ENCODE measurements at regions of chr2 and their contacts with region 1.

Region 1: GRCh38 chr2:181457121-181457740 is at the start of gene ITGA4:
- DNase-seq: peak; percentile 87
- ATAC-seq: peak; percentile 78
- H3K4me3 Mint-ChIP-seq: peak within 1 kb of the TSS; percentile 97
- H3K27ac Mint-ChIP-seq: peak within 1 kb of the TSS; percentile 97
- H3K4me1 Mint-ChIP-seq: peaks cover 64% of the 10 kb centered on the region
- H3K27me3 Mint-ChIP-seq: no peaks in the 10 kb centered on the region
- CTCF ChIP-seq: peak; percentile 23
- total RNA-seq, gene ITGA4: 89.2 and 104 TPM in 2 replicates

Region 2: GRCh38 chr2:180980106-180980942 is 476.9 kb before region 1 on chr2 and contains the start of gene UBE2E3:
- CTCF ChIA-PET with region 1: no interaction called
- POLR2A ChIA-PET with region 1: interaction called, 4 read pairs
- intact Hi-C with region 1: loop called (anchors 2 kb)
- DNase-seq: peak; percentile 79
- ATAC-seq: peak; percentile 80
- H3K4me3 Mint-ChIP-seq: peak within 1 kb of the TSS; percentile 93
- H3K27ac Mint-ChIP-seq: peak within 1 kb of the TSS; percentile 95
- H3K4me1 Mint-ChIP-seq: peaks cover 37% of the 10 kb centered on the region
- H3K27me3 Mint-ChIP-seq: no peaks in the 10 kb centered on the region
- CTCF ChIP-seq: no peak
- total RNA-seq, gene UBE2E3: 33.1 and 33.6 TPM in 2 replicates

Region 3: GRCh38 chr2:181104512-181105115 is 352.6 kb before region 1 on chr2:
- CTCF ChIA-PET with region 1: interaction called, 33 read pairs
- POLR2A ChIA-PET with region 1: interaction called, 3 read pairs
- intact Hi-C with region 1: loop called (anchors 1 kb)
- DNase-seq: no peak
- ATAC-seq: no peak
- H3K4me3 Mint-ChIP-seq: no peak overlapping the region
- H3K27ac Mint-ChIP-seq: no peak overlapping the region
- H3K4me1 Mint-ChIP-seq: peaks cover 8% of the 10 kb centered on the region
- H3K27me3 Mint-ChIP-seq: no peaks in the 10 kb centered on the region
- CTCF ChIP-seq: no peak

Region 4: DNA sequence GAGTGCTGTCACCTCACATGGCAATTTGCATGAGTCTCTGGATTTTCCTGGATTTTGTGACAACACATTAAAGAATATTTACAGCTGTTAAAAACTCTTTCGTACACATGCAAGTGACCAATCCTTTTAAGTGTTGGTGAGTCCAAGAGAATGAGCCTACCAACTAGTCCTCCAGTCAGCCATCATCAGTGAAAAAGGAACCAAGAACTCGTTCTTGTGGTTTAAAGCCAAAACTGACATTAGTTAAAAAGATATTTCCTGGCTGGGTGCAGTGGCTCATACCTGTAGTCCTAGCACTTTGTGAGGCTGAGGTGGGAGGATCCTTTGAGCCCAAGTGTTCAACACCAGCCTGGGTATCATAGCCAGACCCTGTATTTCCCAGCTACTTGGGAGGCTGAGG is 215.4 kb before region 1 on chr2:
- CTCF ChIA-PET with region 1: interaction called, 5 read pairs
- POLR2A ChIA-PET with region 1: no interaction called
- intact Hi-C with region 1: loop called (anchors 5 kb)
- DNase-seq: no peak
- ATAC-seq: no peak
- H3K4me3 Mint-ChIP-seq: no peak overlapping the region
- H3K27ac Mint-ChIP-seq: no peak overlapping the region
- H3K4me1 Mint-ChIP-seq: peaks cover 10% of the 10 kb centered on the region
- H3K27me3 Mint-ChIP-seq: no peaks in the 10 kb centered on the region
- CTCF ChIP-seq: no peak

Region 5: GRCh38 chr2:181419129-181419855 is 37.9 kb before region 1 on chr2:
- CTCF ChIA-PET with region 1: interaction called, 9 read pairs
- POLR2A ChIA-PET with region 1: interaction called, 17 read pairs
- intact Hi-C with region 1: loop called (anchors 2 kb)
- DNase-seq: no peak
- ATAC-seq: peak; percentile 82
- H3K4me3 Mint-ChIP-seq: peak overlapping the region; percentile 20
- H3K27ac Mint-ChIP-seq: peak overlapping the region; percentile 87
- H3K4me1 Mint-ChIP-seq: peaks cover 75% of the 10 kb centered on the region
- H3K27me3 Mint-ChIP-seq: no peaks in the 10 kb centered on the region
- CTCF ChIP-seq: no peak

Region 6: GRCh38 chr2:181438261-181438660 is 19.0 kb before region 1 on chr2:
- CTCF ChIA-PET with region 1: interaction called, 11 read pairs
- POLR2A ChIA-PET with region 1: interaction called, 5 read pairs
- intact Hi-C with region 1: loop called (anchors 1 kb)
- DNase-seq: no peak
- ATAC-seq: no peak
- H3K4me3 Mint-ChIP-seq: no peak overlapping the region
- H3K27ac Mint-ChIP-seq: no peak overlapping the region
- H3K4me1 Mint-ChIP-seq: peaks cover 19% of the 10 kb centered on the region
- H3K27me3 Mint-ChIP-seq: no peaks in the 10 kb centered on the region
- CTCF ChIP-seq: no peak

Region 7: GRCh38 chr2:182715896-182716668 is 1258.9 kb after region 1 on chr2 and contains the start of gene DNAJC10:
- CTCF ChIA-PET with region 1: no interaction called
- POLR2A ChIA-PET with region 1: no interaction called
- intact Hi-C with region 1: loop called (anchors 5 kb)
- DNase-seq: peak; percentile 94
- ATAC-seq: peak; percentile 78
- H3K4me3 Mint-ChIP-seq: no peak within 1 kb of the TSS
- H3K27ac Mint-ChIP-seq: no peak within 1 kb of the TSS
- H3K4me1 Mint-ChIP-seq: peaks cover 12% of the 10 kb centered on the region
- H3K27me3 Mint-ChIP-seq: no peaks in the 10 kb centered on the region
- CTCF ChIP-seq: no peak
- total RNA-seq, gene DNAJC10: 119 and 132 TPM in 2 replicates